Aorta (tissue), 5 donors: ENCODE measurements at regions of chr10 and their contacts with region 1.

Region 1: DNA sequence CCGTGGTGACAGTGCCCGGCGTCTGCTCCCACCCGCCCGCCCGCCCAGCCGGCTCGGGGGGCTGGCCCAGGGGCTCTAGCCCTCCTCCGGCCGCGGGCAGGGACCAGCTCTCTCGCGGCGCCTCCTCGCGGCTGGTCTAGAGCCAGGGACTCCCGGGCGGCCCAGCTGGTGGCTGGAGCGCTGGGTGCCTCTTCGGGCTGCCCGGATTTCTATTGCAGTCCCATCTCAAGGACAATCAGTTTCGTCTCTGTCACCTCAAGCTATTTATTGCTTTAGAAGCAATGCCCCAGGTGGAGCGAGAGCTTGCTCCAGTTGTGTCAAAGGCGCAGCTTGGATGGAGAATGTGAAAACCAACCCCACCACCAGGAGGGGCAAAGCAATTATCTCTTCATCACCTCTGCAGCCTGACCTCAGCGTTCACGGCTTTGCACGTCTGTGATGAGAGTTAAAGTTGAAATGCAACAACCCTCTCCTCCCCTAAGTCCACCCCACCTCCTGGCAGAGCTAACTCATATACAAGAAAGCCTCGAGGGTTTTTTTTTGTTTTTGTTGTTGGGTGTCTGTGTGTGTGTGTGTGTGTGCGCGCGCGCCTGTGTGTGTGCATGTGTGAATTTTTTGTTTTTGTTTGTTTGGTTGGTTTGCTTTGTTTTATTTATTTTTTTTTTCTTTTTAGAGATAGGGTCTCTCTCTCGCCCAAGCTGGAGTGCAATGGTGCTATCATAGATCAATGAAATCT is at the start of gene ITGA8:
- DNase-seq: peak; percentile 81 to 90
- ATAC-seq: peak; percentile 86
- H3K4me3 ChIP-seq: peak within 1 kb of the TSS; percentile 95
- H3K27ac ChIP-seq: peak within 1 kb of the TSS; percentile 48 to 61
- H3K4me1 ChIP-seq: peaks cover 0 to 8% of the 10 kb centered on the region in 2 donors
- H3K27me3 ChIP-seq: no peaks in the 10 kb centered on the region
- total RNA-seq, gene ITGA8: 516 to 885 TPM

Region 2: GRCh38 chr10:15439341-15439842 is 280.7 kb before region 1 on chr10:
- intact Hi-C with region 1: loop called (anchors 5 kb)
- DNase-seq: peak; percentile 79 to 87
- ATAC-seq: peak; percentile 78
- H3K4me3 ChIP-seq: no peak overlapping the region
- H3K27ac ChIP-seq: peak overlapping the region; percentile 52 to 84
- H3K4me1 ChIP-seq: peaks cover 0 to 2% of the 10 kb centered on the region in 2 donors
- H3K27me3 ChIP-seq: no peaks in the 10 kb centered on the region

Region 3: DNA sequence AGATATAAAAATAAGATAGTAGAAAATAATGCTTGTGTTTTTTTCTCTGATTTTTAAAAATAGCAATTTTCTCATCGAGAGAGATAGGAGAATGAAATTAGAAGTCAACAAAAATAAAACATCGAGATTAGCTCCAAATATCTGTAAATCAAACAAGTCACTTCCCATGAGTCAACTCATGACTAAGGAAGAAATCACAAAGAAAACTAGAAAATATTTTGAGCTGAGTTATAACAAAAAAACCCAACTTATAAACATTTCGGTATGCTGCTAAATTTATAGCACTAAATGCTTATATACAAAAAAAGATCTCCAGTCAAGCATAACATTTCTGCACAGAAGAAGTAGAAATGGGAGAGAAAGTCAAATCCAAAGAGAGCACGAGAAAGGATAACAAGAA is 140.5 kb before region 1 on chr10:
- intact Hi-C with region 1: loop called in 1 of 2 experiments (anchors 5 kb)
- DNase-seq: no peak
- ATAC-seq: no peak
- H3K4me3 ChIP-seq: no peak overlapping the region
- H3K27ac ChIP-seq: no peak overlapping the region
- H3K4me1 ChIP-seq: peaks cover 2 to 7% of the 10 kb centered on the region in 2 donors
- H3K27me3 ChIP-seq: no peaks in the 10 kb centered on the region

Region 4: GRCh38 chr10:15780353-15781135 is 60.5 kb after region 1 on chr10:
- intact Hi-C with region 1: loop called (anchors 5 kb)
- DNase-seq: peak; percentile 57 to 83
- ATAC-seq: peak; percentile 66
- H3K4me3 ChIP-seq: no peak overlapping the region
- H3K27ac ChIP-seq: peak overlapping the region in 1 of 2 donors; percentile 86
- H3K4me1 ChIP-seq: peaks cover 2 to 4% of the 10 kb centered on the region in 2 donors
- H3K27me3 ChIP-seq: no peaks in the 10 kb centered on the region